GM10248 (cell line): ENCODE measurements at regions of chrX and their contacts with region 1.

Region 1: DNA sequence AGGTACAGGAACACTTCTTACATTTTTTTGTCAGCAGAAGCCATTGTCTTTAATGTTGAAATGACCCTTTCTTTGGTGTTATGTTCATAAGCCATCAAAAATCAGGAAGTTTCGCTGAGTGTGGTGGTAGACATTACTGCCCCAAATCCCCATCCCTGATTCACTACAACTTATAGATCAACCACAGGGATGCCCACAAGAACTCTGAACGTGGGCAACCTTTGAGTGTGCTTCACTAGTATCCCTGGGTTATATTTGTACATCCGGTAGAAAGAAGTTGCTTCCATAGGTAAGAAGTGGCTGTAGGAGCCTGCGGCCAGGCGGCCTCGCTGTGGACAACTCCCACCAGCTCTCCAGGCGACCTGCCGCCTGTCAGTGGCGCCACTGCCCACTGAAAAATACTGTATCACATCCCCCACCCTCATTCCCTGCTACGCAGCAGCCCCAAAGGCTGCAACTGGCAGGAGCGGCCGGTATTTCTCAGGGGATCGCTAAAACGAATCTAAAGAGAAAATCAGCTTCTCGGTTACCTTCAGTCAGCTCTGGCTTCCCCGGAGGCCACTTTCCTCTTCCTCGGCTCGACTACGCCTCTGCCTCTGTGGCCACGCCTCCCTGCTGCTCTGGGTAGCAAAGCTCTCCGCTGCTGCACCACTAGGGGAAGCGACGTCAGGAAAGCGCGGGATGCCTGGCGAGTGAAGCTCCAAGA is 13.9 kb upstream of the ETDC start:
- DNase-seq: peak; percentile 62
- CTCF ChIP-seq: peak; percentile 20

Region 2: DNA sequence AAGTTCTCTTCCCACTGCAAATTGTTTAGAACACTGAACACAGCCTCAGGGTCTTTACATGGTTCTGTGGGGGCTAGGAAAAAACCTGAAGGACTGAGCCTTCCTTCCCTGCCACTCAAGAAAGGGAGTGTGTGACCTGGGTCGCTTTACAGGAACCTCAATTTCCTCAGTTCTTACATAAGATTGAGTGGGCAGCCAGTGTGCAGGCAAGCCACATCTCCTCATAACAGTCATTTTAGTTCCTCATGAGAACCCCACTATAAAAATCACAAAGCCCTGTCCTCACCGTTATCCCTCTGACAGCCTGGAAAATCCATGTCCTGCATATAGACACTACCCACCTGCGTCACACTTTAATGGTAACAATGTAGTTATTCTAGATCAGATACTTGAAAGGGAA is 11.8 kb after region 1 on chrX:
- CTCF ChIA-PET with region 1: interaction called, 19 read pairs
- POLR2A ChIA-PET with region 1: no interaction called
- DNase-seq: no peak
- CTCF ChIP-seq: no peak

Region 3: DNA sequence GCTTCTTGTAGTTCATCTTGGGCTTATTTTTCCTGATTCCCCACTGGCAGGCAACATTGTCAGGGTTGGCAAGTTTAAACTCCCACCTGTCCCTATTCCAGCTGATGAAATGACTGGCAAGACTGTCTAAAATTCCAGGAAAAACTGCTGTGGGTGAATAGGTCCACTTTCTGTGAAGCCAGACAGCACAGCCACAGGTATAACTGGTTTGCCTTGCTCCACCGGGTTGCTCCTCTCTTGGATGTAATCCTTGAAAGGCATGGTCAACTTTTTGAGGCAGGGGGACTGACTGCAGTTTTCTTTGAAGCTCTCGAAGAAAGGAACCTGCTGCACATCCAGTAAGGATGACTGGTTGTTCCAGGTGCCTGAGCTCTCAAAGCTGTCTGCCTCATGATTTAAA is 288.4 kb after region 1 on chrX:
- CTCF ChIA-PET with region 1: no interaction called
- POLR2A ChIA-PET with region 1: no interaction called
- DNase-seq: no peak
- CTCF ChIP-seq: no peak